ENCODE measurements at regions of chr16 and their contacts with region 1.

Region 1: DNA sequence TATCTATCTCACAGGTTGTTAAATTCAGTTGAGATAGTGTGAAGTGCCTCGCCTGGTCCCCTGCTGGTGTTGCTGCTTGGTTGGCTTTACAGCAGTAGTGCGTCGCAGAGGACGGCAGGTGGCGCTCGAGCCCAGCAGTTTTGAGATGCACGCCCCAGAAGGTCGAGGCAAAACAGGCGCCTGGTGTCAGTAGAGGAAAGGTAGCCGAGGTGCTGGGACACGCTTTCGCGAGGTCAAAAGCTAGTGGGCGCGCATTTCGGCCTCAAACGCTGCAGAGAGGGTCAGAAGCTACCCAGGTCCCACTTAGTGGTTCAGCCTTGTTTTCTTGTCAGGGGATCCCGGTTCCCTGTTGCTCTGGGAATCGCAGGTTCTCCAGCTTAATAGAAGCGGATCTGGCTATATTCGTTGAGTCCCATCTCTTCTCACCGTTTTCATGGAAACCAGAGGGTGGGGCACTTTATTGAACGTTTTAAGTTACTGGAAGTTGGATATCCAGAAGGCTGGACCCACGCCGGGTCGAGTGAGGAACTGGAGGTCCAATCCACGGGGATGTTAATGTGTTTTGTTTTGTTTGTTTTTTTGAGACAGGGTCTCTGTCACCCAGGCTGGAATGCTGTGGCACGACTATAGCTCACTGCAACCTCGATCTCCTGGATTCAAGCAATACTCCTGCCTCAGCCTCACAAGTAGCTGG is 10.3 kb upstream of the ZFP90 start:
- DNase-seq: peak; percentile 39
- ATAC-seq: peak; percentile 90
- H3K4me3 ChIP-seq: no peak overlapping the region
- H3K27ac ChIP-seq: no peak overlapping the region
- H3K4me1 ChIP-seq: peaks cover 7% of the 10 kb centered on the region
- H3K27me3 ChIP-seq: no peaks in the 10 kb centered on the region
- CTCF ChIP-seq: peak; percentile 95 to 98 (median 96); a peak in 5 of 6 replicates
- EP300 ChIP-seq: no peak
- POLR2A ChIP-seq: no peak
- RAD21 ChIP-seq: peak; percentile 96

Region 2: GRCh38 chr16:68384288-68385161 is 144.3 kb before region 1 on chr16:
- CTCF ChIA-PET with region 1: no interaction called
- POLR2A ChIA-PET with region 1: no interaction called
- RAD21 ChIA-PET with region 1: no interaction called
- SMC1A ChIA-PET with region 1: no interaction called
- in situ Hi-C with region 1: no loop called
- intact Hi-C with region 1: no loop called
- DNase-seq: no peak
- ATAC-seq: peak; percentile 53
- H3K4me3 ChIP-seq: no peak overlapping the region
- H3K27ac ChIP-seq: no peak overlapping the region
- H3K4me1 ChIP-seq: peaks cover 10% of the 10 kb centered on the region
- H3K27me3 ChIP-seq: no peaks in the 10 kb centered on the region
- CTCF ChIP-seq: peak in 1 of 3 experiments; percentile 27; a peak in 1 of 6 replicates
- EP300 ChIP-seq: no peak
- POLR2A ChIP-seq: no peak
- RAD21 ChIP-seq: no peak

Region 3: DNA sequence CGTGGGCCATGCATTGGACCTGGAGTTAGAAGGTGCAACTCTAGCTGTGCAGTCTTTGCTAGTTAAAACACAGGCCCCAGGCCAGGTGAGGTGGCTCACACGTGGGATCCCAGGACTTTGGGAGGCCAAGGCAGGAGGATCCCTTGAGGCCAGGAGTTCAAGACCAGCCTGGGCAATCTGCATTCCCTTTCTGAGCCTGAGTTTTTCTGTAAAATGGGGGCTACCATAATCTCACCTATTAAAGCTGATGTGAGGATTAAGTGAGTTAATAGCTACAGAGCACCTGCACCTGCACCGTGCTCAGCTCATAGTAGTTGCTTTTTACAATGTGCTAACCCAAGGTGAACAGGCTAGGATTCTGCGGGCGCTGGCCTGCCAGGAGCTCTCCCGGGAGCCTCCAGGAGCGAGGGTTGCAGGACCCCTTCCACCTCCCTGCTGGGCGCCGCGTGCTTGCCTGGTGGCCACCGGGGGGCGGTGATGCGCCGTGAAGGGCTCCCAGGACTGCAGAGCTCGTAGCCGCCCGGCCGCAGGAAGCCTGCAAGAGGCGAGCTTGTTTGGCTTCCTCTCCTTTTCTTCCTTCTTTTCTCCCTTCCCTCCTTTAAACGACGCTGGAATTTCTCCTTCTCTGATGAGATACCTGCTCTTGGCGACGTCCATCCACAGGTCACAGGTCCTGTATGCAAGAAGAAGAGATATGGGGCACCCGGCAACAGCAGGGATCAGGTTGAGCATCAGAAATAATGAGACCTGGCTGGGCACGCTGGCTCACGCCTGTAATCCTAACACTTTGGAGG is 61.6 kb after region 1 on chr16:
- CTCF ChIA-PET with region 1: interaction called, 41 read pairs
- POLR2A ChIA-PET with region 1: no interaction called
- RAD21 ChIA-PET with region 1: interaction called, 9 read pairs
- SMC1A ChIA-PET with region 1: interaction called, 4 read pairs
- in situ Hi-C with region 1: no loop called
- intact Hi-C with region 1: loop called (anchors 2 kb)
- DNase-seq: no peak
- ATAC-seq: peak; percentile 90
- H3K4me3 ChIP-seq: no peak overlapping the region
- H3K27ac ChIP-seq: no peak overlapping the region
- H3K4me1 ChIP-seq: no peaks in the 10 kb centered on the region
- H3K27me3 ChIP-seq: no peaks in the 10 kb centered on the region
- CTCF ChIP-seq: peak; percentile 34 to 71 (median 65); a peak in 5 of 6 replicates
- EP300 ChIP-seq: no peak
- POLR2A ChIP-seq: no peak
- RAD21 ChIP-seq: peak; percentile 72

Region 4: GRCh38 chr16:68800257-68800875 is 271.5 kb after region 1 on chr16:
- CTCF ChIA-PET with region 1: interaction called, 41 read pairs
- POLR2A ChIA-PET with region 1: no interaction called
- RAD21 ChIA-PET with region 1: interaction called, 8 read pairs
- SMC1A ChIA-PET with region 1: interaction called, 24 read pairs
- in situ Hi-C with region 1: loop called (anchors 25 kb)
- intact Hi-C with region 1: loop called (anchors 1 kb)
- DNase-seq: peak; percentile 66
- ATAC-seq: peak; percentile 99
- H3K4me3 ChIP-seq: no peak overlapping the region
- H3K27ac ChIP-seq: 0 out of 2 replicates have a peak overlapping the region, but pooled peaks have one; percentile 13
- H3K4me1 ChIP-seq: no peaks in the 10 kb centered on the region
- H3K27me3 ChIP-seq: no peaks in the 10 kb centered on the region
- CTCF ChIP-seq: peak; percentile 84 to 93 (median 85)
- EP300 ChIP-seq: no peak
- POLR2A ChIP-seq: no peak
- RAD21 ChIP-seq: peak; percentile 100

Region 5: GRCh38 chr16:68848786-68849185 is 320.0 kb after region 1 on chr16:
- CTCF ChIA-PET with region 1: interaction called, 11 read pairs
- POLR2A ChIA-PET with region 1: no interaction called
- RAD21 ChIA-PET with region 1: interaction called, 5 read pairs
- SMC1A ChIA-PET with region 1: interaction called, 3 read pairs
- in situ Hi-C with region 1: no loop called
- intact Hi-C with region 1: loop called (anchors 5 kb)
- DNase-seq: no peak
- ATAC-seq: no peak
- H3K4me3 ChIP-seq: no peak overlapping the region
- H3K27ac ChIP-seq: no peak overlapping the region
- H3K4me1 ChIP-seq: peaks cover 9% of the 10 kb centered on the region
- H3K27me3 ChIP-seq: no peaks in the 10 kb centered on the region
- CTCF ChIP-seq: no peak
- EP300 ChIP-seq: no peak
- POLR2A ChIP-seq: no peak
- RAD21 ChIP-seq: no peak

Region 6: GRCh38 chr16:69286941-69287713 is 758.3 kb after region 1 on chr16:
- CTCF ChIA-PET with region 1: interaction called, 4 read pairs
- POLR2A ChIA-PET with region 1: no interaction called
- RAD21 ChIA-PET with region 1: interaction called, 4 read pairs
- SMC1A ChIA-PET with region 1: no interaction called
- in situ Hi-C with region 1: loop called (anchors 10 kb)
- intact Hi-C with region 1: loop called (anchors 5 kb)
- DNase-seq: peak; percentile 5
- ATAC-seq: peak; percentile 68
- H3K4me3 ChIP-seq: no peak overlapping the region
- H3K27ac ChIP-seq: no peak overlapping the region
- H3K4me1 ChIP-seq: no peaks in the 10 kb centered on the region
- H3K27me3 ChIP-seq: no peaks in the 10 kb centered on the region
- CTCF ChIP-seq: peak; percentile 26 to 54 (median 32); a peak in 4 of 6 replicates
- EP300 ChIP-seq: no peak
- POLR2A ChIP-seq: no peak
- RAD21 ChIP-seq: peak; percentile 60

Measured in GM12878 (cell line).